Activated CD8-positive, alpha-beta memory T cell treated with anti-CD3 and anti-CD28 coated beads, Interleukin-2, amount 10 ng/mL, durations not matched to agents 7 days and 5 days (primary cell): ENCODE measurements at regions of chr5 and their contacts with region 1.

Region 1: DNA sequence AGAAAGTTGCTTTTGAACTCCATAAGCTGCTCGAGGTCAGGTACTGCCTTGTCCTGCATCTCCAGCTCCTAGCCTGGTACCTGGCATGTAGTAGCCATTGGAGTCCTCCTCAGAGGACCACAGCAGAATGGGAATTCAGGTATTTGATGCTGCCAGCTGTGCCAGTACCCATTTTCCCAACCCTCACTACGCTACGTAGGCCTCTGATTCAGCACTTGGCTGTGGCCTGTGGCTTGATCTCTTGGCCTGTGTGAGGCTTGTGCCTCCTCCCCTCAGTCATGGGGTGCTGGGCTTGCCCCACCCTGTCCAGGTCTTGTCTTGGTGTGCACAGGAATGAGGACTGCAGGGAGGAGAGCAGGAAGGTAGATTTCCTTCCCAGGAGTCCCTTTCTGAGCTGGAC is 11.8 kb downstream of the OTULIN start:
- DNase-seq: peak; percentile 82
- ATAC-seq: peak; percentile 79
- H3K4me3 Mint-ChIP-seq: peak overlapping the region; percentile 63
- H3K27ac Mint-ChIP-seq: peak overlapping the region; percentile 87
- H3K4me1 Mint-ChIP-seq: peaks cover 75% of the 10 kb centered on the region
- H3K27me3 Mint-ChIP-seq: no peaks in the 10 kb centered on the region

Region 2: DNA sequence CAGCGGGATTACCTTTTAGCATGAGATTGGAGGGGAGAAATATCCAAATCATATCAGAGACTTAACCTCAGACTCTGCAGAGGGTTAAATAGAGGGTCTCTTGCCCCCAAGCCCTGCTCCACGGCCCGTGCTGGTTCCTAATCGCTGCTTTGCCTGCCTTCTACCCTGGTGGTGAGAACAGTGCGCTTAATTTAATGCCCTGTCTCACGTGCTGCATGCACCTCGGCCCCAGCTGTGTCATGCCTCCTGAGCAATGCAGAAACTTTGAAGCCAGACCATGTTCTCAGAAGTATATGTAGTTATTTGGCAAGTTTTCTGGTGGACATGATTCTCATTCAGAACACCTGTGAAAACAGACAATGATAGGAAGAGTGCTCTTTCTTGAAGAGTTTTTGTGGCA is 10.4 kb before region 1 on chr5:
- CTCF ChIA-PET with region 1: interaction called, 19 read pairs
- DNase-seq: peak; percentile 78
- ATAC-seq: peak; percentile 31
- H3K4me3 Mint-ChIP-seq: peak overlapping the region; percentile 96
- H3K27ac Mint-ChIP-seq: peak overlapping the region; percentile 94
- H3K4me1 Mint-ChIP-seq: peaks cover 66% of the 10 kb centered on the region
- H3K27me3 Mint-ChIP-seq: no peaks in the 10 kb centered on the region

Region 3: GRCh38 chr5:14925326-14925725 is 249.0 kb after region 1 on chr5:
- CTCF ChIA-PET with region 1: no interaction called
- DNase-seq: no peak
- ATAC-seq: no peak
- H3K4me3 Mint-ChIP-seq: peak overlapping the region; percentile 24
- H3K27ac Mint-ChIP-seq: peak overlapping the region; percentile 83
- H3K4me1 Mint-ChIP-seq: peaks cover 32% of the 10 kb centered on the region
- H3K27me3 Mint-ChIP-seq: no peaks in the 10 kb centered on the region